ENCODE measurements at regions of chr2 and their contacts with region 1.

Region 1: GRCh38 chr2:65064728-65065552 is 8.7 kb downstream of the CEP68 start:
- DNase-seq: peak; percentile 66
- ATAC-seq: peak; percentile 84
- H3K4me3 Mint-ChIP-seq: peak overlapping the region; percentile 35
- H3K27ac Mint-ChIP-seq: peak overlapping the region; percentile 76
- H3K4me1 Mint-ChIP-seq: peaks cover 44% of the 10 kb centered on the region
- H3K27me3 Mint-ChIP-seq: no peaks in the 10 kb centered on the region

Region 2: GRCh38 chr2:65015731-65016130 is 49.2 kb before region 1 on chr2:
- CTCF ChIA-PET with region 1: no interaction called
- POLR2A ChIA-PET with region 1: no interaction called
- intact Hi-C with region 1: no loop called
- DNase-seq: no peak
- ATAC-seq: no peak
- H3K4me3 Mint-ChIP-seq: no peak overlapping the region
- H3K27ac Mint-ChIP-seq: no peak overlapping the region
- H3K4me1 Mint-ChIP-seq: peaks cover 3% of the 10 kb centered on the region
- H3K27me3 Mint-ChIP-seq: no peaks in the 10 kb centered on the region

Region 3: DNA sequence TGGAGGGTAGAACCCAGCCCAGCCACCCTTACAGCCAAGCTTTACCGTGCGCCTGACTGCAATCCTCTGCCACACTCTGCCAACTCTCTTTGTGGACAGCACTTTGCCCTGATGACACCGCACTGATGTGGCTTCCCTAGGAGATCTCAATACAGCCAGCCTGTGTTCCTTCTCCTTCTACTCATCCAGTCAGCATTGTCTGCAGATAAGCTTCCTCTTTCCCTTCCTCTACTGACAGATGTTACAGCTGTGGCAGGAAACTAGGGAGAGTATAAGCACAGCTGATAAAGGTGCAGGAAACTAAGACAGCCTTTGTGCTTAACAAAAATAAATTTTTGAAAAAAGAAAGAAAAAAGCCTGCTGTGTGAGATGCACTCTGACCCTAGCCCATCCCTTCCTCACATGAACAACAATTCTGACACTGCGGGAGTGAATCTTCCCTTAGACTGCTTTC is 16.3 kb after region 1 on chr2:
- CTCF ChIA-PET with region 1: interaction called, 13 read pairs
- POLR2A ChIA-PET with region 1: interaction called, 3 read pairs
- intact Hi-C with region 1: no loop called
- DNase-seq: no peak
- ATAC-seq: no peak
- H3K4me3 Mint-ChIP-seq: no peak overlapping the region
- H3K27ac Mint-ChIP-seq: peak overlapping the region; percentile 4
- H3K4me1 Mint-ChIP-seq: peaks cover 7% of the 10 kb centered on the region
- H3K27me3 Mint-ChIP-seq: no peaks in the 10 kb centered on the region

Region 4: DNA sequence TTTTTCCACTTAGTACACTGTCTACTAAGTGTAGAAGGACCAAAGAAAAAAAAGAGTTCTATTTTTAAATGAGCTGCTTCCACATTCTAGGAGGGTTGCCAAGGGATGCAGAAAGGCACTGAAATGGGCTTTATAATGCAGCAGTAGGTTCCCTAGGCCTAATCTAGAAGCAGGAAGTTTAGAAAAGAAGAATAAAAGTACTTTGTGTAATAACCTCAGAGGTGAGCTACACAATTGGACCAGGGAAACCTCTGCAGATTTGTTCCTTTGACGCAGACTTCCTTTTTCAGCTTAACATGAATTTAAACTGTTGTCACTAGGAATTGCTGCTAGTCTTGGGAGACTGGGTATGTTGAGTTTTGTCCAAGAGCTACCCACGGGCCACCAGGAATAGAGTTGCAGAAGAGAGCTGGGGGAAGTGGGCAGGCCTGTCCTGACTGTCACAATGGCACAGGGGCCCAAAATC is 99.5 kb after region 1 on chr2:
- CTCF ChIA-PET with region 1: interaction called, 60 read pairs
- POLR2A ChIA-PET with region 1: no interaction called
- intact Hi-C with region 1: loop called (anchors 1 kb)
- DNase-seq: no peak
- ATAC-seq: no peak
- H3K4me3 Mint-ChIP-seq: no peak overlapping the region
- H3K27ac Mint-ChIP-seq: no peak overlapping the region
- H3K4me1 Mint-ChIP-seq: peaks cover 21% of the 10 kb centered on the region
- H3K27me3 Mint-ChIP-seq: no peaks in the 10 kb centered on the region

Region 5: DNA sequence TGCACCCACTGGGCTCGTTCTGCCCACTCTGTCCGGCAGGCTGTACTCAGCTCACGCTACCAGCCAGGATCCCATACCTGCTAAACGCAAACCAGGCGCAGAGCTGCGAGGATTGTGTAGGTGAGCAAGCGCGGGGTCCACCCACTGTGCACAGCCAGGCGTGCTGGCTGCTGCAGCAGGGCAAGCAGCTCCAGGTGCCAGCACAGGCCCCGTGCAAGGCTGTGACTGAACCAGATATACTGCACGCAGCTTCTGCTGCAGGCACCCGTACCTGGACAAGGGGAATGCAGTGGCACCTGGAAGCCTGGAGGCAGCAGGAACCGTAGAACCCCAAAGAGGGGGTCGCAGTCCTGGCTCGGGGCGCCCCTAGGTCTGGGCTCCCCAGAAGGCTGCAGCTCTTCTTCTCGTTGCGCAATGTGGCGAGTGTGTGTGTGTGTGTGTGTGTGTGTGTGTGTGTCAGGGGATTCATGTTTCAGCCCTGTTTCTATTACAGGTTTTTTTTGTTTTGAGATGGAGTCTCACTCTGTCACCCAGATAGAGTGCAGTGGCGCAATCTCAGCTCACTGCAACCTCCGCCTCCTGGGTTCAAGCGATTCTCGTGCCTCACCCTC is 111.1 kb after region 1 on chr2:
- CTCF ChIA-PET with region 1: interaction called, 60 read pairs
- POLR2A ChIA-PET with region 1: no interaction called
- intact Hi-C with region 1: no loop called
- DNase-seq: no peak
- ATAC-seq: no peak
- H3K4me3 Mint-ChIP-seq: no peak overlapping the region
- H3K27ac Mint-ChIP-seq: no peak overlapping the region
- H3K4me1 Mint-ChIP-seq: no peaks in the 10 kb centered on the region
- H3K27me3 Mint-ChIP-seq: peaks cover 2% of the 10 kb centered on the region

Region 6: GRCh38 chr2:65227425-65228262 is 162.7 kb after region 1 on chr2 and contains the start of gene ACTR2:
- CTCF ChIA-PET with region 1: interaction called, 7 read pairs
- POLR2A ChIA-PET with region 1: interaction called, 4 read pairs
- intact Hi-C with region 1: loop called (anchors 2 kb)
- DNase-seq: peak; percentile 97
- ATAC-seq: peak; percentile 96
- H3K4me3 Mint-ChIP-seq: peak within 1 kb of the TSS; percentile 95
- H3K27ac Mint-ChIP-seq: peak within 1 kb of the TSS; percentile 98
- H3K4me1 Mint-ChIP-seq: peaks cover 30% of the 10 kb centered on the region
- H3K27me3 Mint-ChIP-seq: no peaks in the 10 kb centered on the region
- total RNA-seq, gene ACTR2: 326 to 388 TPM

Region 7: DNA sequence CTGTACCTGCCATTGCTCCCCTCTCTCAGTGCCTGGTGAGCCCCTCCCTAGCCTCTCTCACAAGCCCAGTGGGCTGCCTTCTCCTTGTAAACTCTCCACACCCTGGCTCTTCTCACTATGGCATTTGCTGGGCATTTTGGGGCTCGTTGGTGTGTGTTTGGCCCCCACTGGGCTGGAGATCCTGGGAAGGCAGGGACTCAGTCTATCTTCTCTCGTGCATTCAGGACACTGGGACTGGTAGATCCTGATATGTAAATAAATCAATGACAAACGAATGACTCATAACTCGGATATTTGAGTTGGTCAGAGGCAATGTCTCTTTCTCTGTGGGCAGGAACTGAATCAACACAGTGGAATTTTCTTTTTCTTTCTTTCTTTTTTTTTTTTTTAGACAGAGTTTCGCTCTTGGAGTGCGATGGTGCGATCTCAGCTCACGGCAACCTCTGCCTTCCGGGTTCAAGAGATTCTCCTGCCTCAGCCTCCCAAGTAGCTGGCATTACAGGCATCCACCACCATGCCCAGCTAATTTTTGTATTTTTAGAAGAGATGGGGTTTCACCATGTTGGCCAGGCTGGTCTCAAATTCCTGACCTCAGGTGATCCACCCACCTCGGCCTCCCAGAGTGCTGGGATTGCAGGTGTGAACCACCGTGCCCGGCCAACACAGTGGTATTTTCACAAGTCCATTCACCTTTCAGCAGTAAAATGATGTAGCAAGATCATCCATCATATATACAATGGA is 512.1 kb after region 1 on chr2:
- CTCF ChIA-PET with region 1: interaction called, 8 read pairs
- POLR2A ChIA-PET with region 1: no interaction called
- intact Hi-C with region 1: loop called (anchors 1 to 2 kb)
- DNase-seq: no peak
- ATAC-seq: peak; percentile 53
- H3K4me3 Mint-ChIP-seq: no peak overlapping the region
- H3K27ac Mint-ChIP-seq: no peak overlapping the region
- H3K4me1 Mint-ChIP-seq: peaks cover 3% of the 10 kb centered on the region
- H3K27me3 Mint-ChIP-seq: peaks cover 9% of the 10 kb centered on the region